CD4-positive, alpha-beta T cell (primary cell): ENCODE measurements at regions of chr9 and their contacts with region 1.

Region 1: DNA sequence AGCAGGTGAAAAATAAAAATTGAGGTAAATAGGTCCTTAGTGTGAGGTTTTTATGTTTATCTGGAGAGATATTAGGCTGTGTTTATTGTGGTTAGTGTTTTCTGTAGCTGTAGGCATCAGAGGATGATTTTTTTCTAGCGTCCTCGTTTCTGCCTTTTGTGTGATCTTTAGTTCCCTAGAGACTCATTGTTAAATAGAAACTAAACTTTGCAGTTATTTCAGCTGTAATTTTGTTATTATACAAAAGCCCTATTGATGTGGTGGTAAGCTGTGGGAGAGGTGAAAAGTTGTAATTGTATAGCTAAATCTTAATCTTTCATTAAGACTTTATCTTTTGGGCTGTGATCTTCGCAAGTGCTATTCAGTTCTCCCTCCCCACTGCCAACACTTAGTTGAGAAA is 340.3 kb downstream of the CYLC2 start:
- DNase-seq: no peak
- ATAC-seq: no peak
- H3K4me3 ChIP-seq: no peak overlapping the region
- H3K4me3 Mint-ChIP-seq: no peak overlapping the region
- H3K27ac ChIP-seq: no peak overlapping the region
- H3K27ac Mint-ChIP-seq: no peak overlapping the region
- H3K4me1 ChIP-seq: no peaks in the 10 kb centered on the region
- H3K4me1 Mint-ChIP-seq: no peaks in the 10 kb centered on the region
- H3K27me3 ChIP-seq: no peaks in the 10 kb centered on the region
- H3K27me3 Mint-ChIP-seq: no peaks in the 10 kb centered on the region
- CTCF ChIP-seq: no peak

Region 2: GRCh38 chr9:103287361-103287760 is 48.1 kb before region 1 on chr9:
- CTCF ChIA-PET with region 1: no interaction called
- POLR2A ChIA-PET with region 1: no interaction called
- intact Hi-C with region 1: loop called in 1 of 2 experiments (anchors 10 kb)
- DNase-seq: no peak
- ATAC-seq: no peak
- H3K4me3 ChIP-seq: no peak overlapping the region
- H3K4me3 Mint-ChIP-seq: no peak overlapping the region
- H3K27ac ChIP-seq: no peak overlapping the region
- H3K27ac Mint-ChIP-seq: no peak overlapping the region
- H3K4me1 ChIP-seq: no peaks in the 10 kb centered on the region
- H3K4me1 Mint-ChIP-seq: no peaks in the 10 kb centered on the region
- H3K27me3 ChIP-seq: no peaks in the 10 kb centered on the region
- H3K27me3 Mint-ChIP-seq: no peaks in the 10 kb centered on the region
- CTCF ChIP-seq: no peak